Vagina (tissue), 2 donors: ENCODE measurements at regions of chr2 and their contacts with region 1.

Region 1: DNA sequence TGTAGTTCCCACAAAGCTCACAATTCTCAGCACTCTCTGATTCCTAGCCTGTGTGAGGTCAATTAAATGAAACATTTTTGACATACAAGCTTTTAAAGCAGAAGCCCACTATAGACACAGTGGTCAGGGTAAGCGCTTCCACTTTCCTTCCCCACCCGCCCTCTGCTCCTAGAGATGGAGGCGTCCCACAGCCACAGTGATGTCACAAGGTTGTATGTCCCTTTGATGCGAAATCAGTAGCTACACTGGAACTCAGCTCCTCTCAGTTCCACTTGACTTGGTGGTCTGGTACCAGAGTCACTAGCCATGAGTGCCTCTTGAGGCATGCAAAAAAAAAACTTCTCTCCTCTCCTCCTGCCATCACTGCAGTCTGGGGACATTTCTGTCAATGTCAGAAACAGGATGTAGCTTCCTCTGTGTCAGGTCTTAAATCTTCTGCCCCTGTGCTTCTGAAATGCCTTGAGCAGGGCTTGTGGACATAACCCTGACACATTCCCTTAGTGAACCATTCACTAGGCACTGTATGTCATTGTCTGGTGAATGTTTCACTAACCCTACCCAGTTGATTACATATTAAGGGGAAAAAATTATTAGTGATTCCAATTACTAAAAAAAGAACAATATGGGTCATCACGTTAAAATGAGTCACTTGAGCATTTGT is 7.8 kb downstream of the SULT1C4 start:
- DNase-seq: no peak
- H3K4me3 ChIP-seq: no peak overlapping the region
- H3K27ac ChIP-seq: no peak overlapping the region
- H3K4me1 ChIP-seq: no peaks in the 10 kb centered on the region
- H3K27me3 ChIP-seq: no peaks in the 10 kb centered on the region
- CTCF ChIP-seq: no peak
- POLR2A ChIP-seq: no peak

Region 2: GRCh38 chr2:107801498-107801897 is 584.0 kb before region 1 on chr2:
- intact Hi-C with region 1: no loop called
- DNase-seq: no peak
- H3K4me3 ChIP-seq: no peak overlapping the region
- H3K27ac ChIP-seq: no peak overlapping the region
- H3K4me1 ChIP-seq: no peaks in the 10 kb centered on the region
- H3K27me3 ChIP-seq: no peaks in the 10 kb centered on the region
- CTCF ChIP-seq: no peak
- POLR2A ChIP-seq: no peak

Region 3: DNA sequence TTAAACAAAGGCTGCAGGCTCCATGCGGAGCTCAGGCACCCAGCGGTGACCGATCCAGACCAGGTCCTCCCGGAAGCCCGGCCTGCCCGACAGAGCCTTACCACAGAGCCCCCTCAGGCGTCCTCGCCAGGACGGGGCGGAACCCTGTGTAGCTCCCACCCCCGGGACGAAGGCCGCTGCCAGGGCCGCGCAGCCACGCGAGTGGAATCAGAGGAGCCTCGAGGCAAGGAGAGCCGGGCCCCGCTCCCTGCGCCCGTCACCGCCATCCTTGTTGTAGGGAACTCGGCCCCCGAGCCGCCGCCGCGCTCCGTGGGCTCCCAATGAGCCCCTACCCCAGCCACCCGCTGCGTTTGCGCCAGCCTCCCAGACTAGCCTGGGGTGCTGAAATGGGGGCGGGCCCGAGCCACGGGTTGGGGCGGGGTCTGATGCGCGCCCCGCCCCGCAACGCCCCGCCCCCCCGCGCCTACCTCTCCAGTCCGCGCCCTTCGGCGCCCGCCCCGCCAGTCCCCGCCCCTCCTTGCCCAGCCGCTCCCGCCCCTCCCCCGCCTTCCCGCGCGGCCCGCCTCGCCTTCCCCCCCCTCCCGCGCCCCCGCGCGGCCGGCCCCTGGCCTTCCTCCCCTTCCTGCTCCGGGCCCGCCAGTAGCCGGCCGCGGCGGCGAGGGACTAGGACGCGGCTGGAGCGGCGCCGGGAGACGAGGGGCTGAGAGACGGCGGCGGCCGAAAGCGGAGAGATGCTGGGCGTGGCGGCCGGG is 148.5 kb after region 1 on chr2 and contains the start of gene LIMS1:
- intact Hi-C with region 1: no loop called
- DNase-seq: peak in 1 of 2 donors; percentile 93
- H3K4me3 ChIP-seq: peak within 1 kb of the TSS; percentile 82 to 89
- H3K27ac ChIP-seq: peak within 1 kb of the TSS; percentile 98
- H3K4me1 ChIP-seq: peaks cover 35% of the 10 kb centered on the region
- H3K27me3 ChIP-seq: no peaks in the 10 kb centered on the region
- CTCF ChIP-seq: no peak
- POLR2A ChIP-seq: peak in 1 of 2 donors; percentile 94
- total RNA-seq, gene LIMS1: 66.0 TPM

Region 4: DNA sequence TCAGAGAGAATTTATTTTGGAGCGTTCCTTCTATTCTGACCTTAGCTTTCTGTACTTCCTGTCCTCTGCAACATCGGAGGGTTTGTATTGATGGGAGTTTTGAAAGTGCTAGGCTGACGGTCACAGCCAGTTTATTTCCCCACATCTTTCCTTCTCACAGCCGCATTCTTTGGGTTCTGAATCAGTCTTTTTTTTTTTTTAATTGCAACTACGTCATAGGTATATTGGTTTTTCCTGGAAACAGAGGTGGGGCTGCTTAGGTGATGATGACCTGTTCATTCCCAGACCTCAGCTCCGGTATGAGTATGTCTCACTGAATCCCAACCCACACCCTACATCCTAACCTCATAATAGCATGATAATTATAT is 1317.1 kb after region 1 on chr2:
- intact Hi-C with region 1: loop called (anchors 5 kb)
- DNase-seq: no peak
- H3K4me3 ChIP-seq: no peak overlapping the region
- H3K27ac ChIP-seq: peak overlapping the region; percentile 44
- H3K4me1 ChIP-seq: peaks cover 17% of the 10 kb centered on the region
- H3K27me3 ChIP-seq: no peaks in the 10 kb centered on the region
- CTCF ChIP-seq: no peak
- POLR2A ChIP-seq: no peak